CD8-positive, alpha-beta T cell (primary cell): ENCODE measurements at regions of chr2 and their contacts with region 1.

Region 1: GRCh38 chr2:38665854-38666555 is at the start of gene GALM:
- DNase-seq: peak in 7 of 9 experiments; percentile 18 to 79 (median 47)
- ATAC-seq: peak; percentile 33
- H3K4me3 ChIP-seq: peak within 1 kb of the TSS; percentile 88 to 92
- H3K4me3 Mint-ChIP-seq: peak within 1 kb of the TSS; percentile 88
- H3K27ac ChIP-seq: peak within 1 kb of the TSS; percentile 22 to 72
- H3K27ac Mint-ChIP-seq: peak within 1 kb of the TSS; percentile 90
- H3K4me1 ChIP-seq: peaks cover 16% of the 10 kb centered on the region
- H3K4me1 Mint-ChIP-seq: peaks cover 56% of the 10 kb centered on the region
- H3K27me3 ChIP-seq: no peaks in the 10 kb centered on the region
- H3K27me3 Mint-ChIP-seq: no peaks in the 10 kb centered on the region
- CTCF ChIP-seq: no peak
- total RNA-seq, gene GALM: 4.4 to 4.7 TPM

Region 2: GRCh38 chr2:38377050-38377828 is 288.8 kb before region 1 on chr2 and contains the start of gene ATL2:
- CTCF ChIA-PET with region 1: no interaction called
- POLR2A ChIA-PET with region 1: no interaction called
- intact Hi-C with region 1: loop called (anchors 2 to 5 kb)
- DNase-seq: peak; percentile 87 to 96 (median 93)
- ATAC-seq: peak; percentile 80
- H3K4me3 ChIP-seq: peak within 1 kb of the TSS; percentile 71 to 93
- H3K4me3 Mint-ChIP-seq: peak within 1 kb of the TSS; percentile 97
- H3K27ac ChIP-seq: peak within 1 kb of the TSS; percentile 84 to 91
- H3K27ac Mint-ChIP-seq: peak within 1 kb of the TSS; percentile 96
- H3K4me1 ChIP-seq: peaks cover 35% of the 10 kb centered on the region
- H3K4me1 Mint-ChIP-seq: peaks cover 69% of the 10 kb centered on the region
- H3K27me3 ChIP-seq: no peaks in the 10 kb centered on the region
- H3K27me3 Mint-ChIP-seq: no peaks in the 10 kb centered on the region
- CTCF ChIP-seq: no peak
- total RNA-seq, gene ATL2: 76.4 to 88.2 TPM

Region 3: GRCh38 chr2:38465789-38466127 is 200.2 kb before region 1 on chr2:
- CTCF ChIA-PET with region 1: no interaction called
- POLR2A ChIA-PET with region 1: no interaction called
- intact Hi-C with region 1: no loop called
- DNase-seq: peak in 3 of 9 experiments; percentile 14 to 48 (median 30)
- ATAC-seq: peak; percentile 51
- H3K4me3 ChIP-seq: no peak overlapping the region
- H3K4me3 Mint-ChIP-seq: no peak overlapping the region
- H3K27ac ChIP-seq: no peak overlapping the region
- H3K27ac Mint-ChIP-seq: no peak overlapping the region
- H3K4me1 ChIP-seq: no peaks in the 10 kb centered on the region
- H3K4me1 Mint-ChIP-seq: no peaks in the 10 kb centered on the region
- H3K27me3 ChIP-seq: no peaks in the 10 kb centered on the region
- H3K27me3 Mint-ChIP-seq: no peaks in the 10 kb centered on the region
- CTCF ChIP-seq: no peak

Region 4: GRCh38 chr2:38682008-38682575 is 16.1 kb after region 1 on chr2:
- CTCF ChIA-PET with region 1: interaction called, 10 read pairs
- POLR2A ChIA-PET with region 1: interaction called, 19 read pairs
- intact Hi-C with region 1: no loop called
- DNase-seq: peak in 2 of 9 experiments; percentile 62 to 72
- ATAC-seq: peak; percentile 80
- H3K4me3 ChIP-seq: no peak overlapping the region
- H3K4me3 Mint-ChIP-seq: peak overlapping the region; percentile 42
- H3K27ac ChIP-seq: peak overlapping the region in 1 of 2 experiments; percentile 76
- H3K27ac Mint-ChIP-seq: peak overlapping the region; percentile 87
- H3K4me1 ChIP-seq: peaks cover 4% of the 10 kb centered on the region
- H3K4me1 Mint-ChIP-seq: peaks cover 26% of the 10 kb centered on the region
- H3K27me3 ChIP-seq: no peaks in the 10 kb centered on the region
- H3K27me3 Mint-ChIP-seq: no peaks in the 10 kb centered on the region
- CTCF ChIP-seq: no peak

Region 5: DNA sequence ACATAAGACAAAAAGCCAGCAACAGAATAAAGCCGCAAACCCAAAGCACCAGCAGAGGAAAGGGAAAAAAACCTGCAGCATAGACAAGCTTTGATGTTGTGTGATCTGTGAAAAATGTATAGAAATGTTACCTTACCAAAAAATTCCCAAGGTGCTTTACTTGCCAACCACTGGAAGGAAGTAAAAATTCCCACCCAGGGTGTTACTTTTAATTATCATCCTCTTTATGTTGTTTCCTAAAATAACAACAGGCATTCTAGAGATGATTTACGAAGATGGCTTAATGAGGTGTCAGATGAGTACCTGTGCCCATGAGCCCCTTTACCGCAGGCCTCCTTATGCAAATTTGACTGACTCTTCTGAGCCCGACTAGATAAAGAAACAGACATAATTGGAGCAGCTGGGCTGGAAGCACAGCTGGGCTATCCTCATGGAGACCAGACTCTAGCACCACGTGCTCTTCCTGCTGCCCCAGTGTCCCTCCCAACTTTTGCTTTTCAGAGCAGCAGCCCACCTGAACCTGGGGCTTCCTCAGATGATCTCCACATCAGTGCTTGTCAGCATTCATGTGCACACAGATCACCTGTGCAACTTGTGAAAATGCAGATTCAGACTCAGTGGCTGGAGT is 43.7 kb after region 1 on chr2:
- CTCF ChIA-PET with region 1: no interaction called
- POLR2A ChIA-PET with region 1: no interaction called
- intact Hi-C with region 1: loop called (anchors 5 kb)
- DNase-seq: peak in 4 of 9 experiments; percentile 30 to 85 (median 68)
- ATAC-seq: peak; percentile 77
- H3K4me3 ChIP-seq: no peak overlapping the region
- H3K4me3 Mint-ChIP-seq: peak overlapping the region; percentile 66
- H3K27ac ChIP-seq: peak overlapping the region in 1 of 2 experiments; percentile 51
- H3K27ac Mint-ChIP-seq: peak overlapping the region; percentile 89
- H3K4me1 ChIP-seq: peaks cover 22% of the 10 kb centered on the region
- H3K4me1 Mint-ChIP-seq: peaks cover 42% of the 10 kb centered on the region
- H3K27me3 ChIP-seq: no peaks in the 10 kb centered on the region
- H3K27me3 Mint-ChIP-seq: no peaks in the 10 kb centered on the region
- CTCF ChIP-seq: no peak

Region 6: DNA sequence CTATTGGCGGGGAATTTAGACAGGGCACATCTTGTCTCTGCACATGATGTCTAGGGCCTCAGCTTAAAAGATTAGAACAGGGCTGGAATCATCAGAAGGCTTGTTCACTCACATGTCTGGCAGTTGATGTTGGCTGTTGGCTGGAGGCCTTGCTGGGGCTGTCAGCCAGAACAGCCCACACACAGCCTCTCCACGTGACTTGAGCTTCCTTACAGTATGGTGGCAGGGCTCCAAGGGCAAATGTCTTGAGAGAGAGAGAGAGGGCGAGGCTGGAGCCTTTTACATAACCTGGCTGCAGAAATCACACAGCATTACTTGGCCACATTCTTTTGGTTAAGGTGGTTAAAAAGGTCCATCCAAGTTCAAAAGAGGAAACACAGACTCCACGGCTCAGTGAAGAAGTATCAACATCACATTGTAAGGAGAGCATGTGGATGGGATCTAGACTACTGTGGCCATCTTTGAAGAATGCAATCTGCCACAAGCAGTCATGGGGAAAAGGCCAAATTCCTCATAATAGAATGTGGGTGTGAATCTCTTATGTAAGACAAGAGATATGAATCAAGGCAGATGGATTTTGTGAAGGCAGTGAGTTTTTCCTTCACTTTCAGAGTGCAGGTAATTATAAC is 54.7 kb after region 1 on chr2:
- CTCF ChIA-PET with region 1: interaction called, 6 read pairs
- POLR2A ChIA-PET with region 1: no interaction called
- intact Hi-C with region 1: loop called in 1 of 2 experiments (anchors 5 kb)
- DNase-seq: no peak
- ATAC-seq: no peak
- H3K4me3 ChIP-seq: no peak overlapping the region
- H3K4me3 Mint-ChIP-seq: no peak overlapping the region
- H3K27ac ChIP-seq: no peak overlapping the region
- H3K27ac Mint-ChIP-seq: peak overlapping the region; percentile 25
- H3K4me1 ChIP-seq: peaks cover 13% of the 10 kb centered on the region
- H3K4me1 Mint-ChIP-seq: peaks cover 30% of the 10 kb centered on the region
- H3K27me3 ChIP-seq: no peaks in the 10 kb centered on the region
- H3K27me3 Mint-ChIP-seq: no peaks in the 10 kb centered on the region
- CTCF ChIP-seq: no peak

Region 7: GRCh38 chr2:38778687-38779082 is 112.7 kb after region 1 on chr2:
- CTCF ChIA-PET with region 1: no interaction called
- POLR2A ChIA-PET with region 1: no interaction called
- intact Hi-C with region 1: loop called in 1 of 2 experiments (anchors 1 kb)
- DNase-seq: no peak
- ATAC-seq: no peak
- H3K4me3 ChIP-seq: peak overlapping the region; percentile 64 to 68
- H3K4me3 Mint-ChIP-seq: peak overlapping the region; percentile 98
- H3K27ac ChIP-seq: peak overlapping the region; percentile 72 to 77
- H3K27ac Mint-ChIP-seq: peak overlapping the region; percentile 99
- H3K4me1 ChIP-seq: peaks cover 6% of the 10 kb centered on the region
- H3K4me1 Mint-ChIP-seq: peaks cover 17% of the 10 kb centered on the region
- H3K27me3 ChIP-seq: peaks cover 0 to 3% of the 10 kb centered on the region in 2 experiments
- H3K27me3 Mint-ChIP-seq: peaks cover 6% of the 10 kb centered on the region
- CTCF ChIP-seq: no peak